ENCODE measurements at regions of chr11 and their contacts with region 1.

Region 1: DNA sequence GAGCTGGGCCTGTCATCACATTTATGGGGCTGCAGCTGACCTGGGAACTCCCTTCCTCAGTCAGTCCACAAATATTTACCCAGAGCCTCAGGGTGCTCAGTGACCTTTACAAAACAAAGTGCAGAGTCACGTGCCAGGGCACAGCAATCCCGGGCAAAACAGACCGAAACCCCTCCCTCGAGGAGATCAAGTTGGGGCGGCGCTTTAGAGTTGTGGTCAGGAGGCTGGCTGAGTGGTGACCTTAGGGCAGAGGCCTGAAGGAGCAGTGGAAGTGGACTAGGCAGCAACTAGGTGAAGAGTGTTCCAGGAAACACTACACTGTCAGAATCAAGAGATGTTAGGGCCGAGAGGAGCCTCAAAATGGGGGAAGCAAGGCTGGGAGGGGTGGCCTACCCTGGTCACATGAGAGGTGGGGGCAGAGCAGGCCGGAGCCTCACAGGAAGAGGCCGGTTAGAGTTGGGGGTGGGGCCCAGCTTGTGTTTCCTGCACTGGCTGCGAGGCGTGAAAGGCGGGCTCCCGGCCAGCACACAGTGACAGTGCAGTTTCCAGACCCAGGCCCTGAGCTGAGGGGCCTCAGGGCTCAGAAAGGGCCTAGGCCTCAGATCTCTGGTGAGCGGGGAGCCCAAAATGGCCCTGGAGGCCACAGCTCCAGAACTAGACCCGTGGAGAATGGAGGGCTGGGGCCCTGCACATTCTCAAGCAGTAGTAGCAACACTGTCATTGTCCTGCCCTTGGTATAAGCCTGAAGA is 3.7 kb upstream of the NEAT1 start:
- DNase-seq: peak; percentile 75

Region 2: DNA sequence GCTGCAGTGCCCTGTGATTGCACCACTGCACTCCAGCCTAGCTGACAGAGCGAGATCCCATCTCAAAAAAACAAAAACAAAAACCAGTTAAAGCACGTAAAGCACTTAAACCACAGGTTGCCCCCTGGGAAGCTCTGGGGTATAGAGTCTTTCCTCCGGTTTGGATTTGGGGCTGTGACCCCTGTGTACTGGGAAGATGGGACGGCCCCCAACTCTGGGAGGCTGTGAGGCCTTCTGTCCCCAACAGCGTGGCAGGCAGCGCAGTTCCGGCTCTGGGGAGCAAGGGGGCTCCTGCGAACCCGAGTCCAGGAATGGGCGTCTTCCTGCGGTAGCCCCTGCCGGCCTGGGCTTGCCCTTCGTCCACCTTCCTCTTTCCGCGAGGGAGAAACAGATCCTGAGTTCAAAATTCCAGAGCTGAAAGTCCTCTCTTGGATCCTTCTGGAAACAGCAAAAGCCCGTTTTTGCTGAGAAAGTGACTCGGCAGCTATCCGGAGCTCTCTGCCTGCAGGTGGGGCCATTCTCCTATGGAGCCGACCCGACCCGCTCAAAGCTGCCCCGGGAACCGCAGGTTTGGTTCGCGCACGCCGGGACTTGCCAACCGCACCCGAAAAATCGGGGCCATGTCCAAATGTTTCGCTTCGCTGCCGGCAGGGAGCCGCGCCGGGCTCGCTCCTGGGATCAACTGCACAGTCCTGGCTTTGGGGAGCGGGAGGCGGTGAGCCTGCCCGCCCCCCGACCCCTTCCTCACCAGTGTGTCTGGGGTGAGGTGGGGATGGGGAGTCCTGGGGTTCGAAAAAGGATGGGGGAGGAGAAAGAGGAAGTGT is 193.4 kb before region 1 on chr11:
- CTCF ChIA-PET with region 1: no interaction called
- POLR2A ChIA-PET with region 1: no interaction called
- DNase-seq: peak; percentile 53

Region 3: DNA sequence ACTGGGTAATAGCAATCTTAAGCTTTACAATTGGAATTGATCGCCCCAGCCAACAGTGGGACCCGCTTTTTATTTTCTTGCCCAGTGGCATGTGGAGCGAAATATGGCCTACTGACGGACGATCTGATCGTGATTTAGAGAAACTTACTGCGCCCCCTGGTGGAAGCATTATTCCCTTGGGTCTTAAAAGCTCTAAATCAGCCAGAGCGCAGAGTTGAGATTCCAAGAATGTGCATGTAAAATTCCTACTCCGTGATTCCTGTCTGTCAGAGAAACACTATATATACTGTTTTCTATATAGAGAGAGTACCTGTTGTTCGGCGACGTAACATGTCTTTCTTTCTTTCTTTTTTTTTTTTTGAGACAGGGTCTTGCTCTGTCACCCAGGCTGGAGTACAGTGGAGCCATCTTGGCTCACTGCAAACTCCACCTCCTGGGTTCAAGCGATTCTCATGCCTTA is 88.9 kb before region 1 on chr11:
- CTCF ChIA-PET with region 1: no interaction called
- POLR2A ChIA-PET with region 1: interaction called, 11 read pairs
- DNase-seq: peak; percentile 69

Region 4: GRCh38 chr11:65401073-65401802 is 17.6 kb before region 1 on chr11:
- CTCF ChIA-PET with region 1: interaction called, 5 read pairs
- POLR2A ChIA-PET with region 1: interaction called, 20 read pairs
- DNase-seq: no peak

Region 5: GRCh38 chr11:65454696-65455456 is 36.0 kb after region 1 on chr11:
- CTCF ChIA-PET with region 1: no interaction called
- POLR2A ChIA-PET with region 1: interaction called, 156 read pairs
- DNase-seq: peak; percentile 71

Region 6: DNA sequence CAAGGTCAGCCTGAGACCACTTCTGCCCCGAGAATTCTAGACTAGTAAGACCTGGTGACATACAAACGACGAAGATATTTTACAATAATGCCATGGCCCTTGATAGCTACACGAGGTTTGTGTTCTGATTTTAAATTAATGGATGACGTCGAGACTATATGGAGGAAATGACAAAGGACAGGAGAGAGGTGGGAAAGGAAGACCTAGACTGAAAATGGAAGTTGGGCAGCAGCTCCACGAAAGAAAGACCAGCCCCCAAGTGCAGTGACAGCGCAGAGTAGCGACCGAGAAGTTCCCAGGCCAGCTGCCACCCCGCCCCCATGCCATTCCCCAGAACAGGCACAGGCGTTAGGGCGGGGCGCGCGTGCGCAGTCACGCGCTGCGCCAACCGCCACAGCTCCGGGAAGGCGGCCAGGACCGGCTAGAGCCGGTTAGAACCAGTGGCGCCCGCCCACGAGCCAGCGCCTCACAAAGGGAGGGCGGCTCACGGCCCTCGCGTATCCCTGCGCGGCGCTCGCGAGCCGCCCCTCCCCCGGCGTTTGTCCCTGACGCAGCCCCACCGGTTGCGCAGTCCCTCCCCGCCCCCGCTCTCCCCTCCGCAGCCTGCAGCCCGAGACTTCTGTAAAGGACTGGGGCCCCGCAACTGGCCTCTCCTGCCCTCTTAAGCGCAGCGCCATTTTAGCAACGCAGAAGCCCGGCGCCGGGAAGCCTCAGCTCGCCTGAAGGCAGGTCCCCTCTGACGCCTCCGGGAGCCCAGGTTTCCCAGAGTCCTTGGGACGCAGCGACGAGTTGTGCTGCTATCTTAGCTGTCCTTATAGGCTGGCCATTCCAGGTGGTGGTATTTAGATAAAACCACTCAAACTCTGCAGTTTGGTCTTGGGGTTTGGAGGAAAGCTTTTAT is 78.5 kb after region 1 on chr11:
- CTCF ChIA-PET with region 1: interaction called, 4 read pairs
- POLR2A ChIA-PET with region 1: interaction called, 1,436 read pairs
- DNase-seq: peak; percentile 85

Region 7: DNA sequence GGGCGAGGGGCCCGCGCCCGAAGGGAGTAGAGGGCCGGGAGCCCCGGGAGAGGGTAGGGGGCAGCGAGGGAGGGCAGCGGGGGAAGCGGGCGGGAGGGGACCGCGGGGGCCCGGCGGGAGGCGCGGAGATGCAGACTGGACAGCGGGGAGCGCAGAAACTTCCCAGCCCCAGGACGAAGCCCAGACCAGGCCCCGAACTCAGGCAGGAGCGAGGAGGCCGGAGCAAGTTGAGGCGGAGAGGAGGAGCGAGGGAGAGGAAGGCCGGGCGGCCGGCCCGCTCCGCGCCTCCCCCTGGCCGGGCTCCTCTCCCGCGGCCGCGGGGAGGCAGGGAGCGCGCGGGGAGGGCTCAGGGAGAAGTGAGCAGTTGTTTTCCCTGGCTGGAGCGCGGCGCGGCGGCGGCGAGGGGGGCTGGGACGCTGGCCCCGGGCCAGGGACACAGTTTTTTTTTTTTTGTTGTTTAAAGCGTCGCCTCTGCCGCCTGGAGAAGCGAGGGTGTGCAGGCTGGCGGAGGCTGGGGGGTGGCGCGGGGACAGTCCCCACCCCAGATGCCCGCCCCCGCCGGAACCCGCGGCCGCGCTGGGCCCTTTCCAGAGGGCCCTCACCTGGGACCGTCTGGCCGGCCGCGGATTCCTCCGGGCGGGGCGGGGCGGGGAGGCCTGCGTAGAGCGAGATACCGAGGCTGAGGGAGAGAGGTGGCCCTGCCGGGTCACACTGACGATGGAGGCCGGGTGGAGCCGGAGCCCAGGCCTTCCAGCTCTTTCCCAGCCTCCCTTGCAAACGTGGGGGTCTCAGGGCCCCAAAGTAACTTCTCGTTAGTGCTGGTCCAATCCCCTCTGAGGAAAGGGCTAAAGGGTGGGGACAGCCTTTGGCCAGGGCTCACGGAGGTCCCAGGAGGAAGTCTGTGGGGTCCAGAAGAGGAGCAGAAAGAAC is 139.4 kb after region 1 on chr11 and contains the start of gene LTBP3:
- CTCF ChIA-PET with region 1: no interaction called
- POLR2A ChIA-PET with region 1: interaction called, 12 read pairs
- DNase-seq: peak; percentile 67

Measured in HEK293T (cell line).